ENCODE measurements at regions of chr9 and their contacts with region 1.

Region 1: GRCh38 chr9:133782157-133783130 is 44.3 kb upstream of the SARDH start:
- DNase-seq: peak; percentile 68
- H3K4me3 ChIP-seq: no peak overlapping the region
- H3K27ac ChIP-seq: no peak overlapping the region
- H3K4me1 ChIP-seq: no peaks in the 10 kb centered on the region
- H3K27me3 ChIP-seq: no peaks in the 10 kb centered on the region
- CTCF ChIP-seq: peak; percentile 84 to 86
- POLR2A ChIP-seq: no peak

Region 2: DNA sequence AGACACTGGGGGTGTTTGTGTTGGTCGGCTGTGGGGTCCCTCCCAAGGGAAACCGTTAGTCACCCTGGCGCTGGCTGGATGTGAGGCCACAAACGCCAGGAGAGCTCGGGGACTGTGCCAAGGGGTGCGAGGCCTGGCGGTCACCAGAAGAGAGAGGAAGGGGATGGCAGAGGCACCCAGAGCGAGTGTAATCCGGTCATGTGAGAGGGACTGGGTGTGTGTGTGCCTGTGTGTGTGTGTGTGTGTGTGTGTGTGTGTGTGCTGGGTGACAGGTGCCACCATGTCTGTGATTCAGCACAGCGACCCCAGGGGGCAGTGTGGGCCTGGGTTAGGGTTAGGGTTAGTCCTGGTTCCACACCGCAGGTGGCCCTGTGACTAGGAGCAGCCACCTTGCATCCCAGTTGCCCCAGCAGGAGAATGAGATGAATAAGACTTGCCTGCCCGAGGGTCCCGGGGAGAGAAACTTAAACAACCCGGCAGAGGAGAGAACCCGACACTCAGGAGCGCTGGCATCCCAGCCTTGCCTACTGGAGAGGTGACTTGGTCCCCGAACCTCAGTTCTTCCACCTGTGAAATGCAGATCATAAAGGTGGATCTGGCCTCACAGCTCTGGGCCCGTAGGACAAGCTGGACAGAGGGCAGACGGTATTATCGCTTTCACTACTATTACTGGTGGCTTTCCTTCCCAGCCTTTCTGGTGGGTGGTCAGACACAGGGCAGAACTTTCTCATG is 249.3 kb before region 1 on chr9:
- CTCF ChIA-PET with region 1: interaction called, 5 read pairs
- POLR2A ChIA-PET with region 1: no interaction called
- dilution Hi-C with region 1: no loop called
- intact Hi-C with region 1: loop called (anchors 5 kb)
- DNase-seq: peak; percentile 26
- H3K4me3 ChIP-seq: no peak overlapping the region
- H3K27ac ChIP-seq: no peak overlapping the region
- H3K4me1 ChIP-seq: no peaks in the 10 kb centered on the region
- H3K27me3 ChIP-seq: peaks cover 9 to 15% of the 10 kb centered on the region in 2 experiments
- CTCF ChIP-seq: peak; percentile 42 to 64
- POLR2A ChIP-seq: no peak

Region 3: DNA sequence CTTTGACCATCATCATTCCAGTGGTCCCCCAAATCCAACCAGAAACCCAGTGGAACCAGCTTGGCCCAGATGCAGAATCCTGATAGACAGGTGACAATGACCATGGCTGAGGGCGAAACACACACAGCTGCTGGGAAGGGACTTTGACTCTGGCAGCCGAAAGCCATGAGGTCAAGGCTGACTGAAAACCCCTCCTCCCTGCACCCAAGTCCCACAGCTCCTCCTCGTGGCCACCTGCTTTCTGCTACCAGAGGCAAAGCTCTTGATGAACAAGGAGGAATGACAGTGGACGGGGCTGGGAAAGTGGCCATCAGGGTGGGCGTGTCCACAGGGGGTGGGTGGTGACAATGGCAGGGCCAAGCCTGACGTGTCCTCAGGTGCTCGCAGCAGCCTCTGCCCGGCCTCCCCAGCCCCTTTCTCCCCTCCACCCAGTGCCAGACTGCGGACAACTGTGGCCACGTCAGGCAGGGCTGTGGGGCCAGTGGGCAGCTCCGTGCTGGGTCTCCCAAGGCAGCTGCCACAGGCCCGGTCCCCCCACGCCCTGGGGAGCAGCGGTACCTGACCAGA is 13.5 kb before region 1 on chr9:
- CTCF ChIA-PET with region 1: interaction called, 23 read pairs
- POLR2A ChIA-PET with region 1: interaction called, 3 read pairs
- dilution Hi-C with region 1: no loop called
- intact Hi-C with region 1: no loop called
- DNase-seq: no peak
- H3K4me3 ChIP-seq: no peak overlapping the region
- H3K27ac ChIP-seq: no peak overlapping the region
- H3K4me1 ChIP-seq: no peaks in the 10 kb centered on the region
- H3K27me3 ChIP-seq: no peaks in the 10 kb centered on the region
- CTCF ChIP-seq: no peak
- POLR2A ChIP-seq: no peak

Region 4: GRCh38 chr9:133955821-133956411 is 173.5 kb after region 1 on chr9:
- CTCF ChIA-PET with region 1: interaction called, 10 read pairs
- POLR2A ChIA-PET with region 1: no interaction called
- dilution Hi-C with region 1: no loop called
- intact Hi-C with region 1: no loop called
- DNase-seq: peak; percentile 56
- H3K4me3 ChIP-seq: peak overlapping the region in 1 of 3 experiments; percentile 1
- H3K27ac ChIP-seq: peak overlapping the region; percentile 69
- H3K4me1 ChIP-seq: peaks cover 35% of the 10 kb centered on the region
- H3K27me3 ChIP-seq: no peaks in the 10 kb centered on the region
- CTCF ChIP-seq: peak in 1 of 2 donors; percentile 26
- POLR2A ChIP-seq: no peak

Region 5: GRCh38 chr9:134007150-134007549 is 224.7 kb after region 1 on chr9:
- CTCF ChIA-PET with region 1: interaction called, 13 read pairs
- POLR2A ChIA-PET with region 1: no interaction called
- dilution Hi-C with region 1: no loop called
- intact Hi-C with region 1: no loop called
- DNase-seq: no peak
- H3K4me3 ChIP-seq: no peak overlapping the region
- H3K27ac ChIP-seq: no peak overlapping the region
- H3K4me1 ChIP-seq: no peaks in the 10 kb centered on the region
- H3K27me3 ChIP-seq: peaks cover 0 to 3% of the 10 kb centered on the region in 2 experiments
- CTCF ChIP-seq: no peak
- POLR2A ChIP-seq: no peak

Region 6: DNA sequence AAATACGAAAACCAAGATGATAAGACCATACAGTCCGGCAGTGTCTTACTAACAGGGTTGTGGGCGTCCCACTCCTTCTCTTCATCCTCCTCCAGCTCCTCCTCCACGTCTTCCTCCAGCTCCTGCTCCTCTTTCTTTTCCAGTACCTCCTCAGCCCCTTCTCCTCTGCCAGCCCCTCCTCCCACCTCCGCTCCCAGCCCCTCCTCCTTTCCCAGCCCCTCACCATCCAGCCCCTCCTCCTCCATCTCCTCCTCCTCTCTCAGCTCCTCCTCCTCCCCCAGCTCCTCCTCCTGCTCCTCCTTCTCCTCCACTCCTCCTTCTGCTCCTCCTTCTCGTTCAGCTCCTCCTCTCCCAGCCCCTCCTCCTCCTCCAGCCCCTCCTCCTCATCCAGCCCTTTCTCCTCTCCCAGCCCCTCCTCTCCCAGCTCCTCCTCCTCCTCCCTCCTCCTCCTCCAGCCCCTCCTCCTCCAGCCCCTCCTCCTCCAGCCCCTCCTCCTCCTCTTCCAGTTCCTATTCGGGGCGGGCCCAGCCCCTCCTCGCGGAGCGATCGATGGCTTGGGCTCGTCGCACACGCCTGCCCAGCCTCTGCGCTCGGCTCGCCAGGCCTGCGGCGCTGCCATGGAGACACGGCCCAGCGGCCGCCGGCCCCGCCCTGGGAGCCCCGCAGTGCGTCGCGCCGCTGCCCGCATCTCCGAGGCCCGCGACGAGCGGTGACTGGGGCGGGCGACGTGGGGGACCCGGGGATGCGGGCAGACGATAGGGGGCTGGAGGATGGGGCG is 242.6 kb after region 1 on chr9 and contains the start of gene BRD3OS:
- CTCF ChIA-PET with region 1: interaction called, 13 read pairs
- POLR2A ChIA-PET with region 1: no interaction called
- dilution Hi-C with region 1: no loop called
- intact Hi-C with region 1: no loop called
- DNase-seq: peak; percentile 98
- H3K4me3 ChIP-seq: peak within 1 kb of the TSS; percentile 62 to 84 (median 76)
- H3K27ac ChIP-seq: no peak within 1 kb of the TSS
- H3K4me1 ChIP-seq: peaks cover 5% of the 10 kb centered on the region
- H3K27me3 ChIP-seq: no peaks in the 10 kb centered on the region
- CTCF ChIP-seq: no peak
- POLR2A ChIP-seq: peak; percentile 43
- total RNA-seq, gene BRD3OS: 15.4 and 18.2 TPM in 2 replicates

Region 7: DNA sequence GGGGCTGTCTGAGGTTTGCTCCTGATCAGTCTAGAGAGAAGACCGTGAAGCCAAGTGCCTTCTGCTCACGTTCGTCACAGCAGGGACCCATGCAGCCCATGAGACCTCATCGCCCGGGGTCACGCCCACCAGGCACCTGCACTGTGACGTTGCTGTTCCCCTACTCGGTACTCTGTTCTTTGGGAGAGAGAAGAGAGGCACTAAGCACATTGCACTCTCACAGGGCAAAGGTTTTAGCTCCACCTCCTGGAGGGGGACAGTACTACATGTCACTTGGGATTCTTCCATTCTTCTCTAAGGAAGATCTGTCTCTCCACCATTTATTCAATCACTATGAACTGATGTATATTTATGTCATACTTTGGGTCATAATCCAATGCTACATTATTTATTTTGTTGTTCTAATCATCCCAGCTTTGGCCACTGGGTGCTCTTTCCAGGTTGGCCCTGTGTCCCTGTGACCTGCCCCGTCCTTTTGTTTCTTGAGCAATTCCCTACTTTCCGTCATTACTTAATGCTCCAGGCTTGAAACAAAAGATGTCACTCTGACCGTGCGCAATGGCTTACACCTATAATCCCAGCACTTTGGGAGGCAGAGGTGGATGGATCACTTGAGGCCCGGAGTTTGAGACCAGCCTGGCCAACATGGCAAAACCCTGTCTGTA is 316.8 kb after region 1 on chr9:
- CTCF ChIA-PET with region 1: interaction called, 12 read pairs
- POLR2A ChIA-PET with region 1: no interaction called
- dilution Hi-C with region 1: no loop called
- intact Hi-C with region 1: loop called (anchors 1 kb)
- DNase-seq: peak; percentile 39
- H3K4me3 ChIP-seq: no peak overlapping the region
- H3K27ac ChIP-seq: no peak overlapping the region
- H3K4me1 ChIP-seq: no peaks in the 10 kb centered on the region
- H3K27me3 ChIP-seq: peaks cover 0 to 3% of the 10 kb centered on the region in 2 experiments
- CTCF ChIP-seq: peak; percentile 63 to 75
- POLR2A ChIP-seq: no peak

Measured in endothelial cell of umbilical vein (primary cell).